Mammary epithelial cell (primary cell): ENCODE measurements at regions of chrX and their contacts with region 1.

Region 1: GRCh38 chrX:152632445-152633097 is 5.1 kb upstream of the GABRQ start:
- DNase-seq: peak; percentile 23
- H3K4me3 ChIP-seq: no peak overlapping the region
- H3K27ac ChIP-seq: no peak overlapping the region
- H3K4me1 ChIP-seq: no peaks in the 10 kb centered on the region
- H3K27me3 ChIP-seq: no peaks in the 10 kb centered on the region
- CTCF ChIP-seq: peak; percentile 79

Region 2: DNA sequence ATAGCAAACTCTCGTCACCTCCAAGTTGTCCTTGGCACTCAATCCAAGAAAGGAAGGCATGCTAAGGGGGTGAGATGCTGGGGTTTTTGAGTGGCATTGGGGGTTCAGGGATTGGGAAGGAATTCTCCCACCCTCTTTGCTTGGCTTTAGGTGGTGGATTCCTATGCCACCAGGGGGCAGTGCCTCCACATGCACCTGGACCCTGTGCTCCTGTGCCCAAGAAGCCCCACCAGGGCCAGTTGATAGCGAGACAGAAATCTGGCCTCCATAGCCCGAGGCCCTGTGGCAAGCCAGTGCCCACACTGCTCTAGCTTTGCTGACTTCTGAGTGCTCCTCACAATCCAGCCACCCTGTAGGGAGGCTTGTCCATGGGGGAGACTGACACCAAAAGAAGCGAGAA is 918.7 kb before region 1 on chrX:
- CTCF ChIA-PET with region 1: interaction called, 3 read pairs
- dilution Hi-C with region 1: no loop called
- in situ Hi-C with region 1: no loop called
- intact Hi-C with region 1: loop called (anchors 1 kb)
- DNase-seq: peak; percentile 8
- H3K4me3 ChIP-seq: no peak overlapping the region
- H3K27ac ChIP-seq: no peak overlapping the region
- H3K4me1 ChIP-seq: no peaks in the 10 kb centered on the region
- H3K27me3 ChIP-seq: no peaks in the 10 kb centered on the region
- CTCF ChIP-seq: peak; percentile 29 to 60

Region 3: GRCh38 chrX:151724563-151725337 is 907.8 kb before region 1 on chrX:
- CTCF ChIA-PET with region 1: no interaction called
- dilution Hi-C with region 1: loop called (anchors 25 kb)
- in situ Hi-C with region 1: loop called in 1 of 2 experiments (anchors 25 kb)
- intact Hi-C with region 1: no loop called
- DNase-seq: no peak
- H3K4me3 ChIP-seq: no peak overlapping the region
- H3K27ac ChIP-seq: no peak overlapping the region
- H3K4me1 ChIP-seq: no peaks in the 10 kb centered on the region
- H3K27me3 ChIP-seq: no peaks in the 10 kb centered on the region
- CTCF ChIP-seq: no peak